Prostate gland (tissue), 2 donors: ENCODE measurements at regions of chr12 and their contacts with region 1.

Region 1: GRCh38 chr12:132153501-132154340 is 9.5 kb downstream of the NOC4L start:
- DNase-seq: peak; percentile 38
- H3K4me3 ChIP-seq: no peak overlapping the region
- H3K27ac ChIP-seq: no peak overlapping the region
- H3K4me1 ChIP-seq: no peaks in the 10 kb centered on the region
- H3K27me3 ChIP-seq: no peaks in the 10 kb centered on the region
- CTCF ChIP-seq: peak; percentile 75 to 94 (median 90)
- POLR2A ChIP-seq: no peak

Region 2: DNA sequence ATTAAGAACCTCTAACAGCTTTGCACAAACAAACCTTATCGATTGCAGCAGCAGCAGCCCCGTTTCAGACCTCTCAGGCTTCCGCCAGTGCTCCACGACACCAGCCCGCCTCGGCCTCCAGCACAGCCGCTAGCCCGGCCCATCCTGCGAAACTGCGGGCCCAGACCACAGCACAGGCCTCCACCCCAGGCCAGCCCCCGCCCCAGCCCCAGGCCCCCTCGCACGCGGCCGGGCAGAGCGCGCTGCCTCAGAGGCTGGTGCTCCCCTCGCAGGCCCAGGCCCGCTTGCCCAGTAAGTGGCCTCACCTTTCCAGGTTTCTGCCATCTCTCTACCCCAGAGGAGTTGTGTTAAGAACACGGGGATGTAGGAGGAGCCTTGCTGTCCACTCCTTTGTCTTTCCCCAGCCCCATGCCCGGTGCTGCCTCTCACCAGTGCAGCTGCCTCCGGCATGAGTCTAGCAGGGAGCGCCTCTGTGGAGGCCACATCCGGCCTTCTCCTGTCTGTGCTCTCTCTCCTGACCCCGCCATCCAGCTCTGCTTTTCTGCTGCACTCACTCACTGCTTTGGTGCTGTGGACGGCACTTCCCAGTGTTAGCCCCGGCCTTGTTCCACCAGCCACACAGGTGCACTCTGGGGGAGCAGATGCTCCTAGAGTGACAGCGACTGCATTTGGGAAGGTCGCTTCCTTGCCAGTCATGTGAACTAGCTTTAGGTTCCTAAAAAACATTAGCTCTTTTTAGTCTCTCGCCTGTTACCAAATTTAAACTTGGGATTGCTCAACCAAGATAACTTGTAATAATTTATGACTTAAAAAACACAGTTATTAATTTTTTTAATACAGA is 132.5 kb before region 1 on chr12:
- intact Hi-C with region 1: no loop called
- DNase-seq: no peak
- H3K4me3 ChIP-seq: no peak overlapping the region
- H3K27ac ChIP-seq: no peak overlapping the region
- H3K4me1 ChIP-seq: no peaks in the 10 kb centered on the region
- H3K27me3 ChIP-seq: no peaks in the 10 kb centered on the region
- CTCF ChIP-seq: no peak
- POLR2A ChIP-seq: no peak

Region 3: DNA sequence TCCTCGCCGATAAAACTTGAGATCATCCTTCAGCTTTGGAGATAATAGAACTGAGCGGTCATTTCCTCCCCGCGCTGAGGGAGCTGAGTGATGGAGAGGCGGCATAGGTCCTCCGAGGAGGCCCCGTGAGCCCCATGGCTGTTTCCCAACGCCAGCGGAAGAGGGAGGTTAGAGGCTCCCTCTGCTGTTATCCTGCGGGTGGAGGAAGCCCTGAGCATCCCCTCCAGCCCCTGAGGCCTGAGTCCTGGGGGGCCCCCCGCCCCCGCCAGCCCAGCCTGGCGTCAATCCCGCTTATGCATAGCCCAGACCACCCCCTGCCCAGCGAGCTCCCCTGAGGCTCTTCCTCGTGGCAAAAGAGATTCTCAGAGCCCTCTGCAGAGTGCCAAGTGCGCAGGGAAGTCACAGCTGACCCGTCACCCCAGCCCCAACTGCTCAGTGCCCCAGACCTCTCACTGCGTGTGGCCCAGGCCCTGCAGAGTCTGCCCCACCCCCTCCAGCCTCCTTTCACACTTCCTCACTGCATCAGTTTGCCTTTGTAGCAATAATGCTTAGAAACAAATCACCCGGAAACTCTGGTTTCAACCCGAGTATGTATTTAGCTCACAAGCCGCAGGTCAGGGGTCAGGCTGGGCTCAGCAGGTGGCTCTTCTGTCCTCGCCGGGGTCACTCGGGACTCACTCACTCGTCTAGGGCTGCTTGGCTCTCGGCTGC is 220.3 kb after region 1 on chr12:
- intact Hi-C with region 1: loop called (anchors 10 kb)
- DNase-seq: no peak
- H3K4me3 ChIP-seq: no peak overlapping the region
- H3K27ac ChIP-seq: no peak overlapping the region
- H3K4me1 ChIP-seq: no peaks in the 10 kb centered on the region
- H3K27me3 ChIP-seq: peaks cover 22% of the 10 kb centered on the region
- CTCF ChIP-seq: peak in 2 of 4 experiments; percentile 19 to 23
- POLR2A ChIP-seq: no peak

Region 4: GRCh38 chr12:132414634-132415326 is 261.1 kb after region 1 on chr12:
- intact Hi-C with region 1: loop called (anchors 10 kb)
- DNase-seq: peak; percentile 72
- H3K4me3 ChIP-seq: no peak overlapping the region
- H3K27ac ChIP-seq: no peak overlapping the region
- H3K4me1 ChIP-seq: no peaks in the 10 kb centered on the region
- H3K27me3 ChIP-seq: no peaks in the 10 kb centered on the region
- CTCF ChIP-seq: peak; percentile 74 to 97 (median 94)
- POLR2A ChIP-seq: no peak

Region 5: GRCh38 chr12:132523576-132524331 is 370.0 kb after region 1 on chr12:
- intact Hi-C with region 1: loop called (anchors 10 kb)
- DNase-seq: peak; percentile 58
- H3K4me3 ChIP-seq: no peak overlapping the region
- H3K27ac ChIP-seq: no peak overlapping the region
- H3K4me1 ChIP-seq: peaks cover 14% of the 10 kb centered on the region
- H3K27me3 ChIP-seq: no peaks in the 10 kb centered on the region
- CTCF ChIP-seq: peak; percentile 60 to 83 (median 68)
- POLR2A ChIP-seq: no peak

Region 6: DNA sequence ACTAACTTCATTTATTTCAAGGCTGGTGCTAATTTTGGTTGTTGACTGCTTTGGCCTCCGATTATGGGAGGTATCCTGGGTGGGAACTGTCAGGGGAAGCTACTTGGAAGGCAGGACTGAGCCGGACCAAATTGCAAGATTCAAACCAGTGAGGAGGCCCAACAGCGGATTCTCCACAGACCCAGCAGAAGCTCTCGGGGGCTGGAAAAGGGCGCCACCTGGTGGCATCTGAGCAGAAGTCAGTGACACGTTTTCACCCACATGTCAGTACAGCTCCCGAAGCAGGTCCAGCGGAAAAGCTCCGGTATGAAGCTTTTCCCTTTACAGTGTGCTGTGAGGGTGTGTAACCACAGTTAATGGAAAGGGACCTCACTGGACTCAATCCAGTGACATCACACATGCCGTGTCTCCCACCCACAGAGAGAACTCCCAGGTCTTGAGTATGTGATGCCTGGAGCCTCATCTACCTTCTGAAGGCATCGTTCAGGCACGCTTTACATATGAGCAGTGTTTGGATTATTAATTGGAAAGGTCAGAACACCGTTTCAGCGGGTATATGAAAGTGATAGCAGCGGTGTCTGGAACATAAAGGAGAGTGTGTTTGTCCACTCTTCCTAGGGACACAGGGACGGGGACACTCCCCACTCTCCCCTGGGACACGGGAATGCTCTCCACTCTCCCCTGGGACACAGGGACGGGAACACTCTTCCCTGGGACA is 461.3 kb after region 1 on chr12:
- intact Hi-C with region 1: loop called (anchors 10 kb)
- DNase-seq: peak; percentile 73
- H3K4me3 ChIP-seq: no peak overlapping the region
- H3K27ac ChIP-seq: no peak overlapping the region
- H3K4me1 ChIP-seq: no peaks in the 10 kb centered on the region
- H3K27me3 ChIP-seq: no peaks in the 10 kb centered on the region
- CTCF ChIP-seq: peak; percentile 56 to 88 (median 80)
- POLR2A ChIP-seq: no peak